ENCODE measurements at regions of chr9 and their contacts with region 1.

Region 1: GRCh38 chr9:4375424-4376200 is 75.7 kb upstream of the GLIS3 start:
- DNase-seq: no peak
- H3K4me3 ChIP-seq: no peak overlapping the region
- H3K27ac ChIP-seq: no peak overlapping the region
- H3K4me1 ChIP-seq: no peaks in the 10 kb centered on the region
- H3K27me3 ChIP-seq: no peaks in the 10 kb centered on the region
- CTCF ChIP-seq: peak; percentile 31 to 49 (median 46)
- POLR2A ChIP-seq: no peak

Region 2: GRCh38 chr9:4327504-4328191 is 48.0 kb before region 1 on chr9:
- intact Hi-C with region 1: loop called (anchors 10 kb)
- DNase-seq: no peak
- H3K4me3 ChIP-seq: no peak overlapping the region
- H3K27ac ChIP-seq: no peak overlapping the region
- H3K4me1 ChIP-seq: no peaks in the 10 kb centered on the region
- H3K27me3 ChIP-seq: no peaks in the 10 kb centered on the region
- CTCF ChIP-seq: no peak
- POLR2A ChIP-seq: no peak